HEK293 (cell line): ENCODE measurements at regions of chr2 and their contacts with region 1.

Region 1: GRCh38 chr2:135997380-135997779 is 12.0 kb upstream of the DARS1 start:
- H3K4me3 ChIP-seq: no peak overlapping the region
- H3K27ac ChIP-seq: no peak overlapping the region
- H3K4me1 ChIP-seq: no peaks in the 10 kb centered on the region
- CTCF ChIP-seq: peak; percentile 47; the same call in 1 of the 2 replicates

Region 2: DNA sequence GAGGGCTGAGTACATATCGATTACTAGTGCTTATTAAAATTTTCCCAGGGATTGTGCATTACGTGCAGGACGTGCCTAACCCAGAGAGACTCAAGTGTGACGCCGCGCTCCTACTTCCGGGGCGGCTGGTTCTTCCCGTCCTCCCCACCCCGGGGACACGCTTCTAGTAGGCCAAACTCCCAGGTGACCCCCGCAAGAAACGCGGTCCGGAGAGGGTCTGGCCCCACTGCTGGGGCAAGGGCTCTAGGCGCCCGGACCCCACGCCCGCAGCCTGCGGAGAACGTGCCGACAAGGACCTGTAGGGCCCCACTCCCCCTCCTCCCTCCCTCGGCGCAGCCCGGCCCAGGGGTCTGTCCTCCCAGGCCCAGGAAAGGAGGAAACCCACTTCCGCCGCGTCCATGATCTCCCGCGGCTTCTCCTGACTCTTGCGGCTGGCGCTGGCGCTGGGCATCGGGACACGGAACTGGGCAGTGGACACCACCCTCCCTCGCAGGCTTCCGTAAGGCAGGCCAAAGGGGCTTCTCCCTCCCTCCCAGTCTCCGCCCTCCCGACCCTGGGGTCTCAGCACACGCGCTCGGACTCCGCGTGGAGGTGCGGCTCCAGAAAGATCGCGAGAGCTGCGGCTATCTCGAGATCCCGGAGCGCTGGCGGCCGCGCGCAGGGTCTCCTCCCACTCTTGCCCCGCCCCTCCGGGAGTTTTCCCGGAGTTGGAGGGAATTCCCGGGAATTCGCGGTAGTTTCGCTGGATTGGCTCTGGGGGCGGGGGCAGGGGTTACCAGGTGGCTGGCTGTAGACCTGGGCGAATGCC is 12.2 kb before region 1 on chr2 and contains the start of gene DARS1:
- CTCF ChIA-PET with region 1: no interaction called
- POLR2A ChIA-PET with region 1: interaction called, 11 read pairs
- H3K4me3 ChIP-seq: peak within 1 kb of the TSS; percentile 92
- H3K27ac ChIP-seq: peak within 1 kb of the TSS; percentile 90
- H3K4me1 ChIP-seq: 0 out of 2 replicates have a peak, but pooled peaks cover 8% of the 10 kb centered on the region
- CTCF ChIP-seq: no peak

Region 3: GRCh38 chr2:136013955-136014354 is 16.6 kb after region 1 on chr2:
- CTCF ChIA-PET with region 1: no interaction called
- POLR2A ChIA-PET with region 1: no interaction called
- H3K4me3 ChIP-seq: no peak overlapping the region
- H3K27ac ChIP-seq: no peak overlapping the region
- H3K4me1 ChIP-seq: no peaks in the 10 kb centered on the region
- CTCF ChIP-seq: no peak

Region 4: GRCh38 chr2:136118819-136119716 is 121.7 kb after region 1 on chr2:
- CTCF ChIA-PET with region 1: interaction called, 10 read pairs
- POLR2A ChIA-PET with region 1: no interaction called
- H3K4me3 ChIP-seq: peak overlapping the region; percentile 73
- H3K27ac ChIP-seq: peak overlapping the region; percentile 80
- H3K4me1 ChIP-seq: peaks cover 5% of the 10 kb centered on the region; the same call in 1 of the 2 replicates
- CTCF ChIP-seq: no peak